Heart right ventricle (tissue), 16 donors: ENCODE measurements at regions of chr10 and their contacts with region 1.

Region 1: GRCh38 chr10:4512671-4513240 is 313.3 kb upstream of the AKR1E2 start:
- DNase-seq: peak; percentile 40 to 58
- ATAC-seq: peak; percentile 49 to 94 (median 76)
- H3K4me3 ChIP-seq: no peak overlapping the region
- H3K27ac ChIP-seq: peak overlapping the region in 9 of 10 donors; percentile 2 to 90 (median 77)
- H3K4me1 ChIP-seq: peaks cover 0 to 48% (median 34%) of the 10 kb centered on the region in 9 donors
- H3K27me3 ChIP-seq: no peaks in the 10 kb centered on the region
- CTCF ChIP-seq: peak; percentile 21 to 71 (median 56)

Region 2: DNA sequence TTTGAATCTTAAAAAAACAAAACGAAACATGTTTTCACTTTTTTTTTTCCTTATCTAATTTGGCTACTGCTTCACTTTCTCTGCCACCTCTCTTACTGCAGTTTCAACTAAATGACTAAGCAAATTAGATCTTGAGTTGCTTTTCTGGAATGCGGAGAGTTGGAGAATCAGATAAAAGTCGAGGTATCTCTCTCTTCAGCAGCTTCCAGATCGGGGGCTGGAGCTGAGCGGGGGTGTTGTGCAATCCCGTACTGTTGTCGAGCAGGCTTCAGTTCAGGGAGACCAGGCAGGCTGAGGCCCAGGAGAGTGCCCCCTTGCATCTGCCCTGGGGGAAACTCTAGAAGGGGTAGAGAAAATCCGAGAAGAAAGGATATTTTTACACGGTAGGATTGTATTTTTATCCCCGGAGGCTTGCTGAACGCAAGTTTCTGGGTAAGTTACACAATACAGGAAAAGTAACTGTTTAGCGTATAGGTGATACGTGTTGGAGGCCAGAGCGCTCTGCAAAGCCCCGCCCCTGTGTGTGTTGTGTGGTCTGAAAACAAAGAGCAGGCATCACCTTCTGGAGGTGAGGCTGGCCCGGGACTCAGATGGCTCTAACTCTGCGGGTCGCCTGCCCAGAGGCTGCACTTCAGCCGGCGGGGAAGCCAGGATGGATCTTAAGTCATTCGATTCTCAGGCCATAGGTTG is 844.3 kb before region 1 on chr10:
- intact Hi-C with region 1: no loop called
- DNase-seq: no peak
- ATAC-seq: peak in 4 of 8 donors; percentile 26 to 55 (median 36)
- H3K4me3 ChIP-seq: peak overlapping the region in 1 of 10 donors; percentile 40
- H3K27ac ChIP-seq: peak overlapping the region in 2 of 10 donors; percentile 48 to 88
- H3K4me1 ChIP-seq: peaks cover 0 to 47% (median 0%) of the 10 kb centered on the region in 9 donors
- H3K27me3 ChIP-seq: no peaks in the 10 kb centered on the region
- CTCF ChIP-seq: no peak

Region 3: GRCh38 chr10:4283846-4284610 is 228.7 kb before region 1 on chr10:
- intact Hi-C with region 1: loop called in 1 of 10 experiments (anchors 10 kb)
- DNase-seq: peak; percentile 55 to 80
- ATAC-seq: peak; percentile 88 to 95 (median 93)
- H3K4me3 ChIP-seq: no peak overlapping the region
- H3K27ac ChIP-seq: peak overlapping the region; percentile 50 to 78 (median 68)
- H3K4me1 ChIP-seq: peaks cover 3 to 61% (median 39%) of the 10 kb centered on the region in 9 donors
- H3K27me3 ChIP-seq: no peaks in the 10 kb centered on the region
- CTCF ChIP-seq: no peak

Region 4: DNA sequence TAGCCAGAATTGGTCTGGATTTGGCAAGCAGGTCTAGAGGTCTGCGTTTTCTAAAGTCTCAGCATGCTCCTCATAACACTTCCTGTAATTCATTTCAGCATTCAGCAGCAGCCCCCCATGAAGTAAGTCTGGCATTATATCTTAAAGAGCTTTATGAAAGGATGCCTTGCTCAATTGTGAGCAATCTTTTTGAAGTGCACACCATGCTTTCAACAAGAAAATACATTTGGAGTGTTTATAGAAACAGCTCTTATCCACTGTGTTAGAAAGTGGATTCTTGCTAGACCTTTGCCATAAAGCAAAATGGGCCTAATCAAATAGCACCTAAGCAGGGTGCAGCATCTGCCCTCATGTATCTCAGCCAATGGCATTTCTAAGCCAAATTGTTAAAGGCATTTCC is 64.7 kb before region 1 on chr10:
- intact Hi-C with region 1: no loop called
- DNase-seq: no peak
- ATAC-seq: no peak
- H3K4me3 ChIP-seq: no peak overlapping the region
- H3K27ac ChIP-seq: peak overlapping the region in 1 of 10 donors; percentile 8
- H3K4me1 ChIP-seq: peaks cover 0 to 15% (median 0%) of the 10 kb centered on the region in 9 donors
- H3K27me3 ChIP-seq: no peaks in the 10 kb centered on the region
- CTCF ChIP-seq: no peak

Region 5: DNA sequence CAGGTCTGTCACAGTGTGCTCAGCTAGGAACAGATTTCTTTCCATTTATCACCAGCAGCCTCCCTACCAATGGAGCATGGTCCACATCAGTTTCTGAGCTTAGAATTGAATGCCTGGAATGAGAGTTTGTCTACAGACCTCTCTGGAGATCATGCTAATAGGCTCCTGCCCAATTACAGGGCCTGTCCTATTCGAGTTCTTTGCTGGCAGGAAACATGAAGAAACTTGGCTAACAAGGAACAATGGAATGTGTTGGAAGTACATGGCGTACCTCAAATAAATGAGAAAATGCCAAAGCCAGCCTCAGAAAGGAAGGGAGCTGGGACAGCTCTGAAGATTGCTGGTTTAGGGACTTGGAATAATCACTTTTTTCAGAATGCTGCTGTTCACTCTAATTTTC is 127.2 kb after region 1 on chr10:
- intact Hi-C with region 1: loop called in 2 of 10 experiments (anchors 5 kb)
- DNase-seq: peak in 1 of 2 donors; percentile 21
- ATAC-seq: peak; percentile 49 to 95 (median 86)
- H3K4me3 ChIP-seq: no peak overlapping the region
- H3K27ac ChIP-seq: peak overlapping the region; percentile 15 to 80 (median 58)
- H3K4me1 ChIP-seq: peaks cover 0 to 21% (median 15%) of the 10 kb centered on the region in 9 donors
- H3K27me3 ChIP-seq: no peaks in the 10 kb centered on the region
- CTCF ChIP-seq: no peak